GM12878 (cell line): ENCODE measurements at regions of chr9 and their contacts with region 1.

Region 1: DNA sequence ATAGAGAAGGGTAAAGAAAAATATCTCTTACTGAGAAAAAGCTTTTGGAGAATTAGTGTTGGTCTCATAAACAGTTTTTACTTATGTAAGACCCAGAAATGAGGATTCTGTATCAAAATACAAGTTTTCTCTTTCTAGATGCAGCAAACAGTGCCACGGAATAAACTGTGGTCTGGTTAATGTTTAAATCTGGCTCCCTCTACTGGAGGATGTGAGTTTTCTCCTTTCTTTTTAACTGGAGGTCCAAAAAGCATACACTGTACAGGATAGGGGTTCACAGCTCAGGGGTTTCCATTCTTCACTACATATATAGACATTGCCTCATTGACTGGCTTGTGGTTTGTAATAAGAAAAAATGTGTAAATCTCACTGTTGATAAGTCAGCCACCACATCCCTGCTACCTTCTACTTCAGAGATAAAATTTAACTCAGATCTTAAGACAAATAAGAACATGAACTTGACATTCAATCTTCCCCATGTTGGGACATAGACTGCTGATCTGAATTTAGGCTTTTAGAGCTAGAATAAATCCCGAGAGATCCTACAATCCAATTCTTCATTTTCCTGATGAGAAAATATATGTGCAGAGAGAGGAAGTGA is 98.9 kb downstream of the CFAP95 start:
- DNase-seq: no peak
- ATAC-seq: peak; percentile 93
- H3K4me3 ChIP-seq: no peak overlapping the region
- H3K27ac ChIP-seq: no peak overlapping the region
- H3K4me1 ChIP-seq: no peaks in the 10 kb centered on the region
- H3K27me3 ChIP-seq: no peaks in the 10 kb centered on the region
- CTCF ChIP-seq: peak; percentile 58 to 71 (median 61)
- EP300 ChIP-seq: no peak
- POLR2A ChIP-seq: no peak
- RAD21 ChIP-seq: peak; percentile 68

Region 2: DNA sequence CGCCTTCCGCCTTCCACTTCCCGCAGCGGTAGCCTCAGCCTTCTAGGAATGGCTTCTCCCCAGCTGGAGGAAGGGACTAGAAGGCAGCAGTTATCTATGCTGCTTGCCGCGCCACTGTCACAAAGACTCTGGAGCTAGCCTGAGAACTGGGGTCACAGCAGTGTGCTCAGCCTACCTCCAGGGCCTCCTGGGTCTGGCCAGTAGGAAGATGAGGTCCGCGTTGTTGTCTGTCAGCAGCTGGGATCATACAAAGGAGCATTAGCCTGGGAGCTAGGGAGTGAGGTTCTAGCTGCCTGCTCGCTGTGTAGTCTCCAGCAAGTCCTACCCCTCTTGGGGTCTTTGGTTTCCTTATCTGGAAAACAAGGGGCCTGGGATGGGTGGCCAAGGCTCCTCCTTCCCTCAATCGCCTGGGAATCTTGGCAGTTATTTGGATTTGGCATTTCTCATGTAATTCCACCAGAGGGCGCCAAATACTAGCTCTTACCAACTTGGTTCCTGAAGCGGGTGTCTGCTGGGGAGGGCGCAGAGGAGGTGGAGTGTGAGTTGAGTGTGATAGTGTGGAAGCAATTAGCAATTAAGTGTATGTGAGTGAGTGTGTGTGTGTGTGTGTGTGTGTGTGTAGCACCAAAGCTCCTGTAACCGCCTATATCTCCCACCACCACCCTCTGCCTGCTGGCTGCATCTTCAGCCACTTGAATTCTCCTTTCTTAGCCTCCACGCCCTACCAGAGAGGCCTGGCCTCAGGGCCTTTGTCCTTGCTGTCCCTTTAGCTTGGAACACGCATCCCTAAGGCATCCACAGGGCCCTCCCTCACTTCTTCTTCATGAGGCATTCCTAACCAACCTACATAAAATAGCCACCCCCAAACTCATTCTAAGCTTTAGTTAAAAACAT is 497.4 kb before region 1 on chr9:
- CTCF ChIA-PET with region 1: interaction called, 43 read pairs
- POLR2A ChIA-PET with region 1: no interaction called
- RAD21 ChIA-PET with region 1: interaction called, 9 read pairs
- SMC1A ChIA-PET with region 1: interaction called, 8 read pairs
- in situ Hi-C with region 1: loop called (anchors 10 kb)
- intact Hi-C with region 1: loop called (anchors 2 kb)
- DNase-seq: no peak
- ATAC-seq: peak; percentile 81
- H3K4me3 ChIP-seq: no peak overlapping the region
- H3K27ac ChIP-seq: no peak overlapping the region
- H3K4me1 ChIP-seq: no peaks in the 10 kb centered on the region
- H3K27me3 ChIP-seq: no peaks in the 10 kb centered on the region; a peak in 2 of 4 replicates
- CTCF ChIP-seq: peak; percentile 63 to 83 (median 70); a peak in 5 of 6 replicates
- EP300 ChIP-seq: no peak
- POLR2A ChIP-seq: no peak
- RAD21 ChIP-seq: peak; percentile 95

Region 3: GRCh38 chr9:69667306-69667705 is 252.3 kb before region 1 on chr9:
- CTCF ChIA-PET with region 1: interaction called, 15 read pairs
- POLR2A ChIA-PET with region 1: no interaction called
- RAD21 ChIA-PET with region 1: interaction called, 4 read pairs
- SMC1A ChIA-PET with region 1: no interaction called
- in situ Hi-C with region 1: loop called (anchors 5 kb)
- intact Hi-C with region 1: loop called (anchors 2 kb)
- DNase-seq: no peak
- ATAC-seq: no peak
- H3K4me3 ChIP-seq: no peak overlapping the region
- H3K27ac ChIP-seq: no peak overlapping the region
- H3K4me1 ChIP-seq: no peaks in the 10 kb centered on the region
- H3K27me3 ChIP-seq: peaks cover 4 to 6% of the 10 kb centered on the region in 2 experiments
- CTCF ChIP-seq: no peak
- EP300 ChIP-seq: no peak
- POLR2A ChIP-seq: no peak
- RAD21 ChIP-seq: no peak

Region 4: DNA sequence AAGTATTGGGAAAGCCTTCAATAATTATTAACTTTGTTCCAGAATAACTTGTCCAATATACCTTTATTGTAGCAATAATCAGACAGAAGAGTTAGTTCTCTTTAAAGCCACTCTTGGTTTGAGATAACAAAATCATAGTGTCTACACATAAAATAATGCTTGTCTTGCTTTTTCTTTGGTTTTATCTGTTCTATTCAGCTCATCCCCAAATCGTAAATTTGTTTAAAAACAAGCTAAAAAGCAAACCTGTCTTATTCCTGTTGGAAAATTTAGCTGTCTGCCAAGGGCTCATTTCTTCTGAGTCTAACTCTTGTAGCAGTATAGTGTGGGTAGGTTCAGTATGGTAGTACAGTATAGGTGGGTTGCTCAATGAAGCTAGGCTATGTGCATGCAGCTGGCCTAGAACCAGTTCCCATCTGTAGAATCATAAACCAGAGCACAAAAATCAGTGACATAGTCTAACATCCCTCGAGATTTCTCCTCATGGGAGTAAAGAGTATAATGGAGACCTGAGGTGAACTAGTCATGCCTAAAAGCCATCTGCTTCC is 229.5 kb before region 1 on chr9:
- CTCF ChIA-PET with region 1: no interaction called
- POLR2A ChIA-PET with region 1: no interaction called
- RAD21 ChIA-PET with region 1: no interaction called
- SMC1A ChIA-PET with region 1: no interaction called
- in situ Hi-C with region 1: no loop called
- intact Hi-C with region 1: no loop called
- DNase-seq: no peak
- ATAC-seq: no peak
- H3K4me3 ChIP-seq: no peak overlapping the region
- H3K27ac ChIP-seq: no peak overlapping the region
- H3K4me1 ChIP-seq: no peaks in the 10 kb centered on the region
- H3K27me3 ChIP-seq: no peaks in the 10 kb centered on the region
- CTCF ChIP-seq: no peak
- EP300 ChIP-seq: no peak
- POLR2A ChIP-seq: no peak
- RAD21 ChIP-seq: no peak

Region 5: GRCh38 chr9:69759421-69760277 is 159.9 kb before region 1 on chr9 and contains the start of gene PTAR1:
- CTCF ChIA-PET with region 1: no interaction called
- POLR2A ChIA-PET with region 1: no interaction called
- RAD21 ChIA-PET with region 1: no interaction called
- SMC1A ChIA-PET with region 1: no interaction called
- in situ Hi-C with region 1: loop called (anchors 10 kb)
- intact Hi-C with region 1: no loop called
- DNase-seq: peak; percentile 35
- ATAC-seq: peak; percentile 86
- H3K4me3 ChIP-seq: peak within 1 kb of the TSS; percentile 92
- H3K27ac ChIP-seq: peak within 1 kb of the TSS; percentile 83
- H3K4me1 ChIP-seq: peaks cover 2% of the 10 kb centered on the region; the same call in 1 of the 2 replicates
- H3K27me3 ChIP-seq: no peaks in the 10 kb centered on the region
- CTCF ChIP-seq: no peak
- EP300 ChIP-seq: no peak
- POLR2A ChIP-seq: peak; percentile 98
- RAD21 ChIP-seq: no peak
- polyA plus RNA-seq, gene PTAR1: 4.9 to 6.6 TPM

Region 6: DNA sequence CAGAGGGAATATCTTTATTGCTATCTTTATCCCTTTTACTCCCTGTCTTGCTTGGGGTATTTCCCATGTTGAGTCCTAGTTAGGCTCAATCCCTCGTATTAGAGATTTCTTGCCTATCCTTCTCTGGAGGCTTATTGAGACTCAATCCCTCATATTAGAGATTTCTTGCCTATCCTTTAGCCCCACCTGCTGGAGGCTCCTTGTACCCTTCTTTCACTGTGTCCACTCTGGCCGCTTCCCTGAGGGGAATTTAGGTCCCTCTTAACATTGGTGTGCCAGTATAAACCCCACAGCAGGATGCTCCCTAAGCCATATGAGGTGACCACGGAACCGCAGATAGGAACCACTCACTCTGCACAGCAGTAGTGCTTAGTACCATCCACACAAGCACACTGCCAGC is 13.3 kb after region 1 on chr9:
- CTCF ChIA-PET with region 1: interaction called, 10 read pairs
- POLR2A ChIA-PET with region 1: no interaction called
- RAD21 ChIA-PET with region 1: interaction called, 3 read pairs
- SMC1A ChIA-PET with region 1: interaction called, 17 read pairs
- in situ Hi-C with region 1: no loop called
- intact Hi-C with region 1: no loop called
- DNase-seq: no peak
- ATAC-seq: peak; percentile 64
- H3K4me3 ChIP-seq: no peak overlapping the region
- H3K27ac ChIP-seq: no peak overlapping the region
- H3K4me1 ChIP-seq: no peaks in the 10 kb centered on the region
- H3K27me3 ChIP-seq: no peaks in the 10 kb centered on the region
- CTCF ChIP-seq: peak; percentile 16 to 35 (median 28); a peak in 4 of 6 replicates
- EP300 ChIP-seq: no peak
- POLR2A ChIP-seq: no peak
- RAD21 ChIP-seq: peak; percentile 24; the same call in 1 of the 2 replicates